Common myeloid progenitor, CD34-positive (primary cell): ENCODE measurements at regions of chr9 and their contacts with region 1.

Region 1: GRCh38 chr9:127770905-127771569 is 7.4 kb downstream of the SH2D3C start:
- DNase-seq: peak; percentile 98 to 99 (median 99)
- H3K4me3 ChIP-seq: peak overlapping the region; percentile 46 to 83 (median 71)
- H3K27ac ChIP-seq: peak overlapping the region in 1 of 2 experiments; percentile 76
- H3K4me1 ChIP-seq: peaks cover 12 to 70% (median 64%) of the 10 kb centered on the region in 4 experiments
- H3K27me3 ChIP-seq: no peaks in the 10 kb centered on the region

Region 2: GRCh38 chr9:127734747-127735529 is 36.1 kb before region 1 on chr9 and contains the start of gene TOR2A:
- CTCF ChIA-PET with region 1: interaction called, 15 read pairs
- POLR2A ChIA-PET with region 1: no interaction called
- DNase-seq: peak; percentile 98 to 99 (median 99)
- H3K4me3 ChIP-seq: peak within 1 kb of the TSS; percentile 53 to 87 (median 71)
- H3K27ac ChIP-seq: peak within 1 kb of the TSS; percentile 87 to 88
- H3K4me1 ChIP-seq: peaks cover 0 to 22% (median 15%) of the 10 kb centered on the region in 4 experiments
- H3K27me3 ChIP-seq: no peaks in the 10 kb centered on the region

Region 3: GRCh38 chr9:127796225-127796813 is 25.3 kb after region 1 on chr9:
- CTCF ChIA-PET with region 1: interaction called, 10 read pairs
- POLR2A ChIA-PET with region 1: interaction called, 4 read pairs
- DNase-seq: peak in 2 of 3 donors; percentile 45 to 63
- H3K4me3 ChIP-seq: peak overlapping the region in 3 of 7 experiments; percentile 16 to 54 (median 32)
- H3K27ac ChIP-seq: peak overlapping the region in 1 of 2 experiments; percentile 55
- H3K4me1 ChIP-seq: peaks cover 19 to 85% (median 65%) of the 10 kb centered on the region in 4 experiments
- H3K27me3 ChIP-seq: no peaks in the 10 kb centered on the region

Region 4: DNA sequence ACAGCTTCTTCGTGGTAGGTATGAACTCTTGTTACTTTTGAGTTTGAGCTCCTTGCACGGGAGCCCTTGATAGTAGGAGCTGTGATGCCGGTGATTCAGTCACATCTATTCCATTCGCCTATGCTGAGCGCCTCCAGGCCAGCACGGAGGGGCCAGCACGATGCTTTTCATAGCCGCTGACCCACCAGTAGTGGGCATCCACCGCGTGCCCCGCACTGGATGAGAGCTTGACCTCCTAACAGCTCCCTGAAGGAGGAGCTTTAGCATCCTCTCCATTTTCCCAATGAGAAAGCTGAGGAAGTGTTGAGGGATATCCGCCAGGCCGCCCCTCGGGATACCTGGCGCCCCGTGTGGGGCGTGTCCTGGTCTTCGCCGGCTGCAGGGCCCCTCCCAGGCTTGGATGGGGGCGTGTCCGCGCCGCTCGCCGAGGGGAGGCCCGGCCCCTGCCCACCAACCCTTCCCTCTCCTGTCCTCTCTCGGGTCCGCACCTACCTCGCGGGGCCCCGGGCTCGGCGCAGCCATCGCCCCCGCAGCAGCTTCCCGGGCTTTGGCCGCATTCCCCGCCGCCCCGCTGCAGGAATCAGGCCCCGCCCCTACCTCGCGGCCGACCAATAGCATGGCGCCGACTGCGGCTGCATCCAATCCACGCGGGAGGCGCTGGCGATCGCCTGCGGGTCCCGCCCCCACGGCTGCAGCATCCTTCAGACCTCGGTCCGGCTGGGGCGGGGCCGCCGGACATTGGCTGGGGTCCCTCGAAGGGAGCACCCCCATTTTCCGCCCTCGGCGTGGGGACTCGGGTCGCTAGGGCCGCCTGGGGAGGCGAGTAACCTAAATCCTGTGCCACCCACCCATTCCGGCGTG is 159.4 kb after region 1 on chr9 and contains the start of gene PIP5KL1:
- CTCF ChIA-PET with region 1: no interaction called
- POLR2A ChIA-PET with region 1: no interaction called
- DNase-seq: peak in 2 of 3 donors; percentile 51 to 59
- H3K4me3 ChIP-seq: peak within 1 kb of the TSS in 6 of 7 experiments; percentile 48 to 78 (median 64)
- H3K27ac ChIP-seq: no peak within 1 kb of the TSS
- H3K4me1 ChIP-seq: peaks cover 0 to 31% (median 30%) of the 10 kb centered on the region in 4 experiments
- H3K27me3 ChIP-seq: peaks cover 0 to 51% (median 23%) of the 10 kb centered on the region in 5 experiments